Ovary (tissue), 10 donors: ENCODE measurements at regions of chr16 and their contacts with region 1.

Region 1: DNA sequence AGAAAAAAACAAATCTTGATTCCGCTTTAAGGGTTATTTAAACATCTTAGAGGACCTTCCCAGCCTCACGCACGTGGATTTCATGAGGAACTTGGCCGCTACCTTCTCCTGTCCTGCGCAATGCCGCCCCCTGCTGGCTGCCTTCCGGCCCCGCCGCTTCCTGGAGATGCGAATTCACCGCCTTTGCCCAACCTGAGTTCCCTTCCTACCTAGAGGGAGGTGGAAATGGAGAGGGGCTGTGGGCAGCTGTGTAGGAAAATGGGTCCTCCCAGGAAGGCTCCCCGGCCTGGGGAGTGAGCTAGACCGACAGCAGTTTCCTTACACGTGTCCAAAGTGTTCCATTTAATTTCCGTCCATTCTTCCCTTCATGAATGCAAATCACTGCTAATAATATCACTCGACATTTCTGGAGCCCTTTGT is 1.0 kb upstream of the ABCC12 start:
- DNase-seq: peak; percentile 61 to 86 (median 78)
- H3K4me3 ChIP-seq: no peak overlapping the region
- H3K27ac ChIP-seq: no peak overlapping the region
- H3K4me1 ChIP-seq: no peaks in the 10 kb centered on the region
- H3K27me3 ChIP-seq: no peaks in the 10 kb centered on the region
- CTCF ChIP-seq: peak in 2 of 3 donors; percentile 51 to 58
- EP300 ChIP-seq: no peak
- POLR2A ChIP-seq: no peak

Region 2: GRCh38 chr16:46853713-46854443 is 1302.9 kb before region 1 on chr16:
- intact Hi-C with region 1: loop called in 1 of 4 experiments (anchors 10 kb)
- DNase-seq: peak; percentile 64 to 88 (median 78)
- H3K4me3 ChIP-seq: no peak overlapping the region
- H3K27ac ChIP-seq: no peak overlapping the region
- H3K4me1 ChIP-seq: no peaks in the 10 kb centered on the region
- H3K27me3 ChIP-seq: no peaks in the 10 kb centered on the region
- CTCF ChIP-seq: peak; percentile 47 to 64 (median 59)
- EP300 ChIP-seq: no peak
- POLR2A ChIP-seq: no peak

Region 3: DNA sequence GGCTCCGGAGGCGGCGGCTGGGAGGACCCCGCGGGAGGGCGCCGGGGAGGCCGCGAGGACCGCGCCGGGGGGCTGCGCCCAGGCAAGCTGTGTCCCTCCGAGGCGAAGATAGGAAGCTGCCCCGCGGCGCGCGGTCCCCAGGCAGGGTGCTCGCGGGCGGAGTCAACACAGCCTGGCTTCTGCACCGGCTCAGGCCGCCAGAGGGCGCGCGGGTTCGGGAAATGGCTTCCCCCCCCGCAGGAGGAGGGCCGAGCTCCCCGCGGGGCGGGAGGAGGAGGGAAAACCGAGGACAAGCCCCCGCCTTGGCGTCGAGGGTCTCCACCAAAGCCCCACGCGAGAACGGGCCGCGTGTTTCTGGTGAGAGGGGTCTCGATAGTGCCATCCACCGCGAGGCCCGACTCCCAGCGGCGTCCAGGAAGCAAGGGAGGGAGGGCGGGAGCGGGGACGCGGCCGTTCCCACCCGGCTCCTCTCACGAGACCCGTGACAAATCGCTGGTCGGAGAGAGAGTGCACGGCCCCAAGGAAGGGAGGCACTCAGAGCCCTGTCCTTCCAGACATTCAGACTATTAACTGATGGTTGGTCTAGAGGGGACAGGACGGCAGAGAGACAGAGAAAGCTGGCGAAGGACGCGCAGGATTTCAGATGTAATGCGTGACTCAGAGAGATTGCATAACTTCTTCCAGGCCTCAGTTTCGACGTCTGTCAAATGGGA is 1118.9 kb before region 1 on chr16:
- intact Hi-C with region 1: loop called in 1 of 4 experiments (anchors 10 kb)
- DNase-seq: peak; percentile 88 to 94 (median 93)
- H3K4me3 ChIP-seq: peak overlapping the region; percentile 70
- H3K27ac ChIP-seq: peak overlapping the region; percentile 59 to 77
- H3K4me1 ChIP-seq: peaks cover 7% of the 10 kb centered on the region
- H3K27me3 ChIP-seq: no peaks in the 10 kb centered on the region
- CTCF ChIP-seq: peak; percentile 91 to 95 (median 92)
- EP300 ChIP-seq: no peak
- POLR2A ChIP-seq: no peak

Region 4: GRCh38 chr16:47136101-47136820 is 1020.5 kb before region 1 on chr16:
- intact Hi-C with region 1: loop called in 3 of 4 experiments (anchors 5 to 10 kb)
- DNase-seq: no peak
- H3K4me3 ChIP-seq: no peak overlapping the region
- H3K27ac ChIP-seq: no peak overlapping the region
- H3K4me1 ChIP-seq: no peaks in the 10 kb centered on the region
- H3K27me3 ChIP-seq: no peaks in the 10 kb centered on the region
- CTCF ChIP-seq: no peak
- EP300 ChIP-seq: no peak
- POLR2A ChIP-seq: no peak

Region 5: GRCh38 chr16:47141773-47142485 is 1014.9 kb before region 1 on chr16:
- intact Hi-C with region 1: loop called (anchors 5 to 10 kb)
- DNase-seq: peak; percentile 58 to 78 (median 66)
- H3K4me3 ChIP-seq: peak overlapping the region; percentile 25
- H3K27ac ChIP-seq: no peak overlapping the region
- H3K4me1 ChIP-seq: peaks cover 1% of the 10 kb centered on the region
- H3K27me3 ChIP-seq: no peaks in the 10 kb centered on the region
- CTCF ChIP-seq: peak; percentile 57 to 61 (median 60)
- EP300 ChIP-seq: no peak
- POLR2A ChIP-seq: no peak